Sigmoid colon (tissue), 7 donors: ENCODE measurements at regions of chr12 and their contacts with region 1.

Region 1: DNA sequence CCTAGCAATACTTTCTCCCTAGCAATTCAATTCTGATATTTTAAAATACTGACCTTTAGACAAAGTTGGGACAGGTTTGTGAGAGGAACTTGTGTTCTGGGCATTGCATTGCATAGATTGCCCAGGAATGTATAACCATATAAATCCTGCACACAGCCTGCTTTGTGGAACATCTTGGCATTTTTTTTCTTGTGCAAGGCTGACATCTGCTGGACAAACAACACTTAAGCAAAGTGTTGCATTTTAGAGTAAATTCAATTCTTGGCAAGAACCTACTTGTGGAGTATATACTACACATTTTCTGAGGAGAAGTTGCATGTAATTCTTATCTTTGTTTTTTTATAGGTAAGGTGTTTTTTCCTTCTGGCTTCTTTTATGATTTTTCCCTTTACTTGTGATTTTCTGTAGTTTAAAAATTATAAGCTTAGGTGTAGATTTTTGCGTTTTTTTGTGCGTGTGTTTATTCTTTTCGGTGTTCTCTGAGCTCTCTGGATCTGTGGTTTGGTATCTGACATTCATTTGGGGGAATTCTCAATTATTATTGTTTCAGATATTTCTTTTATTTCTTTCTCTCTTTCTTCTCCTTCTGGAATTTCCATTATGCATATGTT is 26.4 kb downstream of the TESPA1 start:
- DNase-seq: no peak
- H3K4me3 ChIP-seq: no peak overlapping the region
- H3K27ac ChIP-seq: no peak overlapping the region
- H3K4me1 ChIP-seq: no peaks in the 10 kb centered on the region
- H3K27me3 ChIP-seq: no peaks in the 10 kb centered on the region
- CTCF ChIP-seq: peak in 3 of 4 experiments; percentile 44 to 63 (median 55)
- EP300 ChIP-seq: no peak
- POLR2A ChIP-seq: no peak

Region 2: DNA sequence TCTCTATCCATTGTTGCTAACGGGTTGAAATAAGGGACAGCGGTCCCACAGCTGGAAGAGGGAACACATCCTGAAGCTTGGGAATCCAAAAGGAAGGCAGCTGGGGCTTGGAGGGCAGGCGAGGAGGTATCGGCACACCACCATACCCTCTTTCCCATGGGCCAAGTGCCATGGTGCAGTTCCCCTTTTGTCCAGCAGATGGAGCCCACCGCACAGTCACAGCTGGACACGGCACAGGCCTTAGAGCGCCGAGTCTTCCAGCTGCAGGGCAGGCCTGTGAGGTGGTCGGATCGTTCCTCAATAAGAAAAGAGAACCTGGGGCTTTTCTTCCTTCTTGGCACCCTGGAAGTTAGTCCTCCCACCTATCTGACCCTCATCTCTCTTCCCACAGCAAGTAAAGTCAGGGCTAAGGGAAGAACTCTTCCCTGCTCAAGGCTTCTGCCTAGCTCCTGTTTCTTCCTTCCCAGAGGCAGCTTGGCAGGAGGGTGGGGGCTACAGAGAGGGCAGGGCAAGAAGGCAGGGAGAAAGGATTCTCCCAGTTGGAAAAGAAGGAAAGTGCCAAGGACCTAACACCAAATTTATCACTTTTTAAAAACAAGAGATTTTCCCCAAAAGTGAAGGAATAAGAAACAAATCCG is 378.3 kb before region 1 on chr12:
- intact Hi-C with region 1: loop called (anchors 5 kb)
- DNase-seq: peak; percentile 92
- H3K4me3 ChIP-seq: no peak overlapping the region
- H3K27ac ChIP-seq: peak overlapping the region in 2 of 4 donors; percentile 44 to 52
- H3K4me1 ChIP-seq: peaks cover 0 to 9% (median 8%) of the 10 kb centered on the region in 4 donors
- H3K27me3 ChIP-seq: no peaks in the 10 kb centered on the region
- CTCF ChIP-seq: peak; percentile 96 to 100 (median 98)
- EP300 ChIP-seq: no peak
- POLR2A ChIP-seq: no peak

Region 3: DNA sequence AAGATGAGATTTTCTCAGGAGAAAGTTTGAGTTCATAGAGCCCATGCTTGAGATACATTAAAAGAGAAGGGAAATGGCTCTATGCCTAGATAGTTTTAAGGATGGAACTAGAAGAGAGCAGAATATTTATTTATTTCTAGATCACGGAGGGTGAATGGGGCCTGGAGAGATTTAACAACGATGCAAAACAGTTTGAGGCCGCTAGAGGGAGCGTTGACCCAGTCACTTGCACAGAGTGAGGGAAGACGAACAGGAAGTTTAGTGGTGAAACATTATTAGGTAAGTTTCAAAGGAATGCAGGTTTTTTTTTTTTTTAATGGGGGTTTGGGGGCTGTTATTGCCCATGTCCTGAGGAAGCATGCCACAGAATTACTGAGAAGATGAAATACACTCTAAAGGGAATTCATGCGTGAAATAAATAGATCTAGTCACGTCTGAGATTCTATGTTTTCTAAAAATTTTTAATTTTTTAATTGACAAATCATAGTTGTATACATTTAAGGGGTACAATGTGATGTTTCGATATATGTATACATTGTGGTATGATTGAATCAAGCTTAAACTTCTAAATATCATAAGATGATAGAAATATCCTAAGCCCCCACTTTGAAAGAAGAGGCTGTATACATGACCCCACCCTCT is 354.9 kb before region 1 on chr12:
- intact Hi-C with region 1: loop called (anchors 2 kb)
- DNase-seq: peak; percentile 76
- H3K4me3 ChIP-seq: no peak overlapping the region
- H3K27ac ChIP-seq: no peak overlapping the region
- H3K4me1 ChIP-seq: no peaks in the 10 kb centered on the region
- H3K27me3 ChIP-seq: no peaks in the 10 kb centered on the region
- CTCF ChIP-seq: peak; percentile 35 to 78 (median 58)
- EP300 ChIP-seq: no peak
- POLR2A ChIP-seq: no peak

Region 4: GRCh38 chr12:54701940-54702592 is 256.1 kb before region 1 on chr12:
- intact Hi-C with region 1: loop called (anchors 2 kb)
- DNase-seq: no peak
- H3K4me3 ChIP-seq: no peak overlapping the region
- H3K27ac ChIP-seq: no peak overlapping the region
- H3K4me1 ChIP-seq: no peaks in the 10 kb centered on the region
- H3K27me3 ChIP-seq: no peaks in the 10 kb centered on the region
- CTCF ChIP-seq: peak in 3 of 4 experiments; percentile 15 to 45 (median 41)
- EP300 ChIP-seq: no peak
- POLR2A ChIP-seq: no peak

Region 5: DNA sequence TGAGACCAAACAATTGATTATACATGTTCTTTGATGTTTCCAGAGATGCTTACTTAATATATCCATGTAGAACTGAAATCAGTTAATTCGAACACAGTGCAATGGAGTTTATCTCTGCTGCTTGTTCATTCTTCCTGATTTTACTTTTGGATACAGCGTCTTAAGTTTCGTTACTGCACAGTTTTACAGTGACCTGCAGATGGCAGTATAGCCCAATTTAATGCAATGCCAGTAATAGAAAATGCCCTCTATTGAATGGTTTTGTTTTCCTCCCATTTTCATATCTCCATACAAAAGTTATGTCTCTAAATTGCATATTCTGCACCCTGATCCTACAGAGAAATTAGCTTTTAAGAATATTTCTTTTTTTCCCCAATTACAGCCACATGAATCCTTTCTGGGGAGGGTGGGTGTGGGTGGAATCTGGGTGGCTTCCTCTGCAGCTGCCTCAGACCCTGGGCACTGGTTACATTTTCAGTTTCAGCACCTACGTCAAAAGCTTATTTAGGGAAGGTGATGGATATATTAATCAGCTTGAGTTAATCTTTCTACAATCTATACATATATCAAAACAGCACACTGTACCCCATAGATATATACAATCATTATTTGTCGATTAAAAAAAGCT is 208.8 kb before region 1 on chr12:
- intact Hi-C with region 1: loop called (anchors 5 kb)
- DNase-seq: no peak
- H3K4me3 ChIP-seq: no peak overlapping the region
- H3K27ac ChIP-seq: no peak overlapping the region
- H3K4me1 ChIP-seq: no peaks in the 10 kb centered on the region
- H3K27me3 ChIP-seq: no peaks in the 10 kb centered on the region
- CTCF ChIP-seq: peak in 3 of 4 experiments; percentile 22 to 63 (median 62)
- EP300 ChIP-seq: no peak
- POLR2A ChIP-seq: no peak